ENCODE measurements at regions of chr6 and their contacts with region 1.

Region 1: GRCh38 chr6:141309295-141309694 is 823.4 kb upstream of the GJE1 start:
- DNase-seq: no peak
- ATAC-seq: no peak
- H3K4me3 ChIP-seq: no peak overlapping the region
- H3K27ac ChIP-seq: no peak overlapping the region
- H3K4me1 ChIP-seq: no peaks in the 10 kb centered on the region
- H3K27me3 ChIP-seq: no peaks in the 10 kb centered on the region
- CTCF ChIP-seq: peak in 1 of 5 experiments; percentile 11
- POLR2A ChIP-seq: no peak

Region 2: GRCh38 chr6:140718021-140718420 is 591.3 kb before region 1 on chr6:
- in situ Hi-C with region 1: no loop called
- intact Hi-C with region 1: no loop called
- DNase-seq: no peak
- ATAC-seq: no peak
- H3K4me3 ChIP-seq: no peak overlapping the region
- H3K27ac ChIP-seq: no peak overlapping the region
- H3K4me1 ChIP-seq: no peaks in the 10 kb centered on the region
- H3K27me3 ChIP-seq: no peaks in the 10 kb centered on the region
- CTCF ChIP-seq: no peak
- POLR2A ChIP-seq: no peak

Region 3: GRCh38 chr6:141218583-141218982 is 90.7 kb before region 1 on chr6:
- in situ Hi-C with region 1: no loop called
- intact Hi-C with region 1: no loop called
- DNase-seq: no peak
- ATAC-seq: no peak
- H3K4me3 ChIP-seq: no peak overlapping the region
- H3K27ac ChIP-seq: no peak overlapping the region
- H3K4me1 ChIP-seq: no peaks in the 10 kb centered on the region
- H3K27me3 ChIP-seq: no peaks in the 10 kb centered on the region
- CTCF ChIP-seq: no peak
- POLR2A ChIP-seq: no peak

Region 4: DNA sequence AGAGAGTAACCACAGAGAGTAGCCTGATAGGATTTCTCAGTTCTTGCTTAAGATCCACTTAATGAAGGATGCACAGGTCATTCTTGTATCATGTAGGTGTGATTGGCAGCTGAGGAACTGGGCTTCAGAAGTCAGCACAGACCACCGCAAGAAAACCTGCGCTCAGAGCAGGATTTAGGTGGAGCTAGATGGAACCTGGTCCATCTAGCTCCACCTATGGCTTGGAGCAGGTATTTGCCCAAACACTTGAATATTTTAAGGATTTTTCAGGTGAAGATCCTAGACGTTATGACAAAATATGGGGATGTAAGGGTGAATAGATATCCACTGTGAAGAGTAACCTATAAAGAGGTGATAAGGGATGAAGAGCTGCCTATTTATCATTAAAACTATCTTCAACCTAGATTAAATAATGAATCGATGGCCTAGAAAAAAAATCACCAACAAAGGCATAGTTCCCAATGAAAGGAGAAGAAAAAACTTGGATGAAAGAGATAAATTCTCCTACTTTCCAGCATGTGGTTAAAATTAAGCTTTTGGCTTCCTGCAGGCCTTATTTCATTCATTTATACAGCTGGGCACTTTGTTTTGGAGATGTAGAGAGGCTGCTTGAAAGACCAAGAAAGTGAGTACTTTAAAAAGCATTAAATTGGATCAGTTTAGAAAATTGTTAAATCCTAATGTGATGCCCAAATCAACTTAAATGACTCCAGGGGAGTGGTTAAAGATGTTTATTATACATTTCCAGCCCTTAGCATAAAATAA is 45.1 kb after region 1 on chr6:
- in situ Hi-C with region 1: no loop called
- intact Hi-C with region 1: no loop called
- DNase-seq: no peak
- ATAC-seq: no peak
- H3K4me3 ChIP-seq: no peak overlapping the region
- H3K27ac ChIP-seq: no peak overlapping the region
- H3K4me1 ChIP-seq: no peaks in the 10 kb centered on the region
- H3K27me3 ChIP-seq: no peaks in the 10 kb centered on the region
- CTCF ChIP-seq: no peak
- POLR2A ChIP-seq: no peak

Region 5: DNA sequence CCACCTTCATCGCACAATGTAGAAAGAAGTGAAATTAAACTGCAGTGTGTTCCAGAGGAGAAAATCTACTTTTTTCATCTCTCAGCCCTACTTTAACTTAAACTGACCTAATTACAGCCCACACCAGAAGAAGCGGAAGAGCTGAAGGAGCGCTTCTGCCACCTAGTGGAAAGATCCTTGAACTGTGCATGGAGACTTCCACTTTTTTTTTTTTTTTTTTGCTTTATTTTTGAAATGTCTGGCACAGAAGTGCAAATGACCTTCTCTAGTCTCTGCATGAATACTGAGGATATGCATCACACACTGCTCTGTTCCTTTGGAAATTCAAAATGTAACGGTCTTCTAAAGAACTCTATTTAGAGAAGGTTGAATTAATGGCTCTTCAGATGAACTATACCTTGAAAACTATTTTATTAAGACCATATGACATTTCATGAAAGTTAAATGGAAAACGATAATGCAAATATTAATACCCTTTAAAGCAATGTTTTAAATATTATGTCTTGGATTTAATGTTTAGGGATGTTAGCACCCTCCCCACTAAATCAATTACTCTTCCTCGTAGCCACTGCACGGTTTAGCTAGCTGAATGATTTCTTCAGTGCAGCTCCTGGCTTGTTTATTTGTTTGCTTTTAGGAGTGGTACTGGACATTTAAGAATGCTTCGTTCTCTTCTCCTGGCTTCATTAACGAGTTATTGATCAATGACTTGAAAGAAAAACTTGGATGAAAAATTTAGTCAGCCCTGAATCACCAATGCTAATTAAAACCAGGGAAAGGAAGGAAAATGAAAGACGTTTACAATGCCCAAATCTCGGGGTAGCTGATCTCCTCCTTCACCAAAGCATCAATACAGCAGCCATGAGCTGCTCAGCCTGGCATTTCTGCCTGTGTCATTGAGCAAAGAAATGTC is 253.8 kb after region 1 on chr6:
- in situ Hi-C with region 1: loop called in 2 of 4 experiments (anchors 25 kb)
- intact Hi-C with region 1: loop called (anchors 10 kb)
- DNase-seq: peak in 1 of 2 donors; percentile 19
- ATAC-seq: peak; percentile 79 to 91
- H3K4me3 ChIP-seq: peak overlapping the region; percentile 19 to 43 (median 38)
- H3K27ac ChIP-seq: peak overlapping the region; percentile 36 to 72 (median 62)
- H3K4me1 ChIP-seq: peaks cover 0 to 12% of the 10 kb centered on the region in 2 donors
- H3K27me3 ChIP-seq: no peaks in the 10 kb centered on the region
- CTCF ChIP-seq: peak; percentile 70 to 91 (median 88)
- POLR2A ChIP-seq: no peak

Measured in gastrocnemius medialis (tissue), 4 donors.